ENCODE measurements at regions of chrX and their contacts with region 1.

Region 1: DNA sequence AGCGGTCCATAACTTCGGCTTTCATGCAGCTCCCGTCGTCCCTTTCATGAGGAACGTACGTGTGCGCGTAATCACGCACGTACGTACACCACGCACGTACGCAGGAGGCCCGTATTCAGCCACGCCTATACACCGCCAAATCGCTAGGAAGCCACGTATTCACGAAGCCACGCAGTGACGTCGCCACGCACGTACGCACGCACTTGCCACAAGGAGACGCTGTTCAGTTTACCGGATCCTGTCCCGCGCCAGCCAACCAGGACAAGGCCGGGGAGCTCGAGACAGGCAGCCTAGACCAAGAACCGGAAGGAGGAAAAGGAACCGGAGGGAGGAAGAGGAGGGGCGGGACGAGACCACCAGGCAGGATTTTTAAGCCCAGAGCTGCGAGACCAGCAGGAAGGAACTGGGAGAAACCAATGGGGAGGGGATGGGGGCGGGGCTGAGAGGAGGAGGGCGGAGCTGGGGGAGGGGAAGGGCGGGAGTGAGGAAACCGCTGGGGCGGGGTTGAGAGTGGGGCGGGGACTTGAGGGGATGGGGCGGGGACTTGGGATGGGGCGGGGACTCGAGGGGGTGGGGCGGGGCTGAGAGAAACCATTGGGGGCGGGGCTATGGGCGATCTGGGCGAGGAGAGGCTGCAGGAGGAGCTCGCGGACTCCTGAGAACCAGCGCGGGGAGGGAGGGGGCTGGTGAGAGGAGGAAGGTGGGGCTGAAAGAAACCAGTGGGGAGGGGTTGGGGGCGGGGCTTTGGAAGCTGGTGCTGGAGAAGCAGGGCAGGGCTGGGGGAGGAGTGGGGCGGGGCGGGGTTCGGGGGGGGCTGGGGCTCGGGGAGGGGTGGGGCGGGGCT is at the start of gene EOLA2:
- DNase-seq: peak; percentile 82 to 98
- ATAC-seq: peak; percentile 57 to 77 (median 62)
- H3K4me3 ChIP-seq: peak within 1 kb of the TSS; percentile 96
- H3K4me3 Mint-ChIP-seq: peak within 1 kb of the TSS; percentile 90
- H3K27ac ChIP-seq: peak within 1 kb of the TSS; percentile 100
- H3K27ac Mint-ChIP-seq: peak within 1 kb of the TSS; percentile 92 to 99
- H3K4me1 ChIP-seq: peaks cover 14% of the 10 kb centered on the region
- H3K4me1 Mint-ChIP-seq: peaks cover 8 to 14% of the 10 kb centered on the region in 2 donors
- H3K27me3 ChIP-seq: no peaks in the 10 kb centered on the region
- H3K27me3 Mint-ChIP-seq: no peaks in the 10 kb centered on the region
- CTCF ChIP-seq: peak; percentile 26
- total RNA-seq, gene EOLA2: 80.9 to 94.9 (median 85.5) TPM

Region 2: DNA sequence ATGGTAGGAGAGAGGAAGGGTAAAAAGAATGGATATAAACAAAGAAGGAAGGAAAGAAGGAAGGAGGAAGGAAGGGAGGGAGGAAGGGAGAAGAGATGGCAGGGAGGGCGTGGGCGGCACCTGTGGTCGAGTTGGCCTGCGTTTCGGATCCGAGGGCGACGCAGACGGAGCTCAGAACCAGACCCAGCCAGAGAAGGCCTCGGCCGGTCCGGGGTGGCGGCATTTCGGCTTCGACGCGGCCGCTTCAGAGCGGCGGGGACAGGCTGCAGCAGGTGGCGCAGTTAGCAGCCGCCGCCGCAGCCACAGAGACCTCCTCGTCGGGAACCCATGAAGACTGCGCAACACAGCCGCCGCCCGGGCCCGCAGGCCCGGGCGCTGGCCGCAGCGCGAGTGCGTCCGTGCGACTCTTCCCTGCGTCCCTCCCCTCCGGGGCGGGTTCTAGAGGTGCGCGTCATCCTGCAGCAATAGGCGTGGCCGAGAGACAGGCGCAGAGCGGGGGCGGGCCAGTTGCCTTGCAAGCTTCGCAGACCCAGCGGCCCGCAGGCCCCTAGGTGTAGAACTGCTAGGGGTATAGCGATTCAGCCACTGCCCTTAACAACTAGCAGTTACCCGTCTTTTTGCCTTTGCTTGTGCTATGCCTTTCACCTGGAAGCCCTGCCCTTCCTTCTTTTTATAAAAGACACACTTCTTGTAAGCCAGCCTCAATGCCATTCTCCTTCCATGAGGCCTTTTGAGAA is 433.6 kb before region 1 on chrX and contains the start of gene IDS:
- intact Hi-C with region 1: loop called (anchors 10 kb)
- DNase-seq: peak; percentile 82 to 93
- ATAC-seq: peak; percentile 71 to 89 (median 80)
- H3K4me3 ChIP-seq: peak within 1 kb of the TSS; percentile 79
- H3K4me3 Mint-ChIP-seq: peak within 1 kb of the TSS; percentile 85
- H3K27ac ChIP-seq: peak within 1 kb of the TSS; percentile 98
- H3K27ac Mint-ChIP-seq: peak within 1 kb of the TSS; percentile 92 to 99
- H3K4me1 ChIP-seq: peaks cover 45% of the 10 kb centered on the region
- H3K4me1 Mint-ChIP-seq: peaks cover 37 to 44% of the 10 kb centered on the region in 2 donors
- H3K27me3 ChIP-seq: no peaks in the 10 kb centered on the region
- H3K27me3 Mint-ChIP-seq: peaks cover 0 to 10% of the 10 kb centered on the region in 2 donors
- CTCF ChIP-seq: no peak
- total RNA-seq, gene IDS: 286 to 344 (median 317) TPM

Region 3: GRCh38 chrX:149539283-149540130 is 399.1 kb before region 1 on chrX:
- intact Hi-C with region 1: loop called (anchors 10 kb)
- DNase-seq: peak; percentile 71 to 94
- ATAC-seq: peak; percentile 56 to 72 (median 59)
- H3K4me3 ChIP-seq: peak overlapping the region; percentile 64
- H3K4me3 Mint-ChIP-seq: peak overlapping the region; percentile 97
- H3K27ac ChIP-seq: peak overlapping the region; percentile 76
- H3K27ac Mint-ChIP-seq: peak overlapping the region; percentile 95 to 96
- H3K4me1 ChIP-seq: peaks cover 14% of the 10 kb centered on the region
- H3K4me1 Mint-ChIP-seq: peaks cover 6 to 33% of the 10 kb centered on the region in 2 donors
- H3K27me3 ChIP-seq: no peaks in the 10 kb centered on the region
- H3K27me3 Mint-ChIP-seq: no peaks in the 10 kb centered on the region
- CTCF ChIP-seq: no peak

Region 4: GRCh38 chrX:149871940-149872339 is 66.7 kb before region 1 on chrX:
- intact Hi-C with region 1: loop called (anchors 10 kb)
- DNase-seq: peak; percentile 61 to 73
- ATAC-seq: peak; percentile 96 to 99 (median 98)
- H3K4me3 ChIP-seq: no peak overlapping the region
- H3K4me3 Mint-ChIP-seq: no peak overlapping the region
- H3K27ac ChIP-seq: no peak overlapping the region
- H3K27ac Mint-ChIP-seq: peak overlapping the region; percentile 32 to 55
- H3K4me1 ChIP-seq: peaks cover 6% of the 10 kb centered on the region
- H3K4me1 Mint-ChIP-seq: peaks cover 9 to 14% of the 10 kb centered on the region in 2 donors
- H3K27me3 ChIP-seq: no peaks in the 10 kb centered on the region
- H3K27me3 Mint-ChIP-seq: peaks cover 13 to 37% of the 10 kb centered on the region in 2 donors
- CTCF ChIP-seq: peak; percentile 40

Region 5: GRCh38 chrX:150693775-150694574 is 755.3 kb after region 1 on chrX:
- intact Hi-C with region 1: loop called (anchors 2 kb)
- DNase-seq: peak; percentile 48 to 76
- ATAC-seq: peak; percentile 44 to 75 (median 66)
- H3K4me3 ChIP-seq: peak overlapping the region; percentile 48
- H3K4me3 Mint-ChIP-seq: peak overlapping the region; percentile 94
- H3K27ac ChIP-seq: peak overlapping the region; percentile 89
- H3K27ac Mint-ChIP-seq: peak overlapping the region; percentile 81 to 91
- H3K4me1 ChIP-seq: peaks cover 64% of the 10 kb centered on the region
- H3K4me1 Mint-ChIP-seq: peaks cover 42 to 46% of the 10 kb centered on the region in 2 donors
- H3K27me3 ChIP-seq: no peaks in the 10 kb centered on the region
- H3K27me3 Mint-ChIP-seq: no peaks in the 10 kb centered on the region
- CTCF ChIP-seq: no peak